GM10248 (cell line): ENCODE measurements at regions of chr19 and their contacts with region 1.

Region 1: GRCh38 chr19:45717166-45717982 is 13.3 kb downstream of the FBXO46 start:
- DNase-seq: peak; percentile 98
- CTCF ChIP-seq: peak; percentile 11

Region 2: GRCh38 chr19:45705115-45705514 is 12.3 kb before region 1 on chr19:
- CTCF ChIA-PET with region 1: interaction called, 23 read pairs
- POLR2A ChIA-PET with region 1: interaction called, 5 read pairs
- DNase-seq: no peak
- CTCF ChIP-seq: no peak

Region 3: GRCh38 chr19:45730389-45731288 is 13.3 kb after region 1 on chr19 and contains the start of gene FBXO46:
- CTCF ChIA-PET with region 1: interaction called, 14 read pairs
- POLR2A ChIA-PET with region 1: interaction called, 3 read pairs
- DNase-seq: peak; percentile 96
- CTCF ChIP-seq: peak; percentile 19